HAP-1 (cell line): ENCODE measurements at regions of chrX and their contacts with region 1.

Region 1: DNA sequence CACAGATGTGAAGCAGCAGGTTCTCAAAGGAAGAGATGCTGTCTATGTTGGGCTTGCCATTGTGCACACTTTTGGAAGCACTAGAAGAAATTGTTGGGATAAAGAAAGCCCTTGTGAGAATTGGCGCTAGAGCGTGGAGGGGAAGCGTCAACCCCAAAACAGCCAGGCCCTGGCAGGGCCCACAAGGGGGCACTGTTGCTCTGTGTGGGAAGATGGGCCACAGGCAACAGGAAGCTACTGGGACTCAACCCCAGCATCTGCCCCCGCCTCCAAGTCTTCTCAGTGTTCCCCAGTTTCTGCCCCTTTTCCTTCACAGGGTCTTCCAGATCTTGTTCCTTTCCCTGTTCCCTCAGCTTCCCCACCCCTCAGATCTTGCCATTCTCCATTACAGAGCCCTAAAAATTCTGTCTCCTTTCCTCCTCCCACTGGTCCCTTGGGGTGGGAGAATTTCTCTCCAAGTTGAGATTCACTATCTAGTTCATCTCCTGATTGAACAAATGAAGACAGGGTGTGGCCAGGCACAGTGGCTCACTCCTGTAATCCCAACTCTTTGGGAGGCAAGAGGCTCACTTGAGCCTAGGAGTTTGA is 85.5 kb downstream of the STARD8 start:
- DNase-seq: peak; percentile 52 to 88
- H3K4me3 ChIP-seq: no peak overlapping the region
- H3K4me1 ChIP-seq: no peaks in the 10 kb centered on the region
- H3K27me3 ChIP-seq: no peaks in the 10 kb centered on the region; the same call in 1 of the 2 replicates

Region 2: DNA sequence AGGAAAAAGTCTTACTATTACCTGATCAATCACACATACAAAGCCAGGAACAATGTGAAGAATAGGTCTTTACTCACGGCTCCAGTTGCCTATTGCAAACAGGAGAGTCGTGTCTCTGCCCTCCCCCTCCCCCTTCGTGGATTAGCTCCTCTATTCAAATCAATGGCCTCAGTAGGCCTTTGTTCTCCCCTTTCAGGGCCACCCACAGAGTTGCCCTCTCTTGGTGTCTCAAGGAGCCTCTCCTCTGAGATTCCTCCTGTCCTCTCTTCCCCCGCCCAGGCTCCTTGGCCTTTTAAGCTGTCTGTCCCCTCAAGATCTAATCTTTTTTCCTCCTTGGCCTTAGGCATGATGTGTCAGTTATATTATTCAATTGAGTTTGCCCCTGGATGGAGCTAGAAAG is 663.9 kb after region 1 on chrX:
- in situ Hi-C with region 1: loop called (anchors 10 kb)
- DNase-seq: peak; percentile 57 to 80
- H3K4me3 ChIP-seq: no peak overlapping the region
- H3K4me1 ChIP-seq: peaks cover 6% of the 10 kb centered on the region; the same call in 1 of the 2 replicates
- H3K27me3 ChIP-seq: no peaks in the 10 kb centered on the region